GM10248 (cell line): ENCODE measurements at regions of chr3 and their contacts with region 1.

Region 1: GRCh38 chr3:45938864-45939263 is 4.4 kb upstream of the CXCR6 start:
- DNase-seq: peak; percentile 79
- CTCF ChIP-seq: peak; percentile 82

Region 2: DNA sequence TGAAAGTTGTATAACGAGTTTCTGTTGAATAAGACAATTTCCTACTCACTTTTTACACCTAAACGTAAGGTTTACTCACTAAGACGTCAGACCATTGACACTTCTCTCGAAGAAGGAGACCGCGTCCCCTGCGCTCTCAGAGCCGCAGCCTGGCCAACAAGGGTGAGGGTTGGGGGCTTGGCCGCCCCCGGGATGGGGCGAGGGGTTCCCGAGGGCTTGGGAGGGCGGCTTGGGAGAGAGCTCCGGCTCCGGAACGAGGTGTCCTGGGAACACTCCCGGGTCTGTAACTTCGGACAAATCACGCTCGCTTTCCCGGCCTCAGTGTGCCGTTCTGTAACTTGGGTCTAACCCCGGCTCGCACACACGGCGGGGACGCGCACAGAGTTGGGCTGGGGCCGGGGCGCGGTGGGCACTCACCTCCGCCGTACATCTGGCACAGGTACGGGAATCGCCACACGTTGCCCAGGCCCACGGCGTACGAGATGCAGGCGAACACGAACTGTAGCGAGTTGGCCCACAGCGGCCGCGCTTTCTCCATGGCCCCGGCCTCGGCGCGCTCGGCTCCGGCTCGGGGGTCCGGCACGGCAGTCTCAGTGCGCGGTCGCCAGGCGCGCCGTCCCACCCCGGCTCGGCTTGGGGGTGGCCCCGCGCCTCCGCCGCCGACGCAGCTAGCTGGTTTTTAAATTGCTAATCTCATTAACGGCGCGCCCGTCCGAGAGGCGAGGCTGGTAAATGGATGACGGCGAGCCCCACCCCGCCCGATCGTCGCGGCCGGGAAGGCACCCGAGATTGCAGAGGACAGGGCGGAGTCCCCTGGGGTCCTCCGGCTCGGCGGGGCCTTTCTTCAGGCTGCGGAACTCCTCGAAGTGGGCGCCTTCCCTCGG is 142.7 kb before region 1 on chr3 and contains the start of gene SLC6A20:
- CTCF ChIA-PET with region 1: no interaction called
- POLR2A ChIA-PET with region 1: no interaction called
- DNase-seq: peak; percentile 47
- CTCF ChIP-seq: no peak

Region 3: GRCh38 chr3:45907769-45908705 is 30.8 kb before region 1 on chr3:
- CTCF ChIA-PET with region 1: interaction called, 10 read pairs
- POLR2A ChIA-PET with region 1: no interaction called
- DNase-seq: no peak
- CTCF ChIP-seq: no peak

Region 4: GRCh38 chr3:45923755-45924154 is 15.1 kb before region 1 on chr3:
- CTCF ChIA-PET with region 1: interaction called, 66 read pairs
- POLR2A ChIA-PET with region 1: no interaction called
- DNase-seq: no peak
- CTCF ChIP-seq: no peak

Region 5: DNA sequence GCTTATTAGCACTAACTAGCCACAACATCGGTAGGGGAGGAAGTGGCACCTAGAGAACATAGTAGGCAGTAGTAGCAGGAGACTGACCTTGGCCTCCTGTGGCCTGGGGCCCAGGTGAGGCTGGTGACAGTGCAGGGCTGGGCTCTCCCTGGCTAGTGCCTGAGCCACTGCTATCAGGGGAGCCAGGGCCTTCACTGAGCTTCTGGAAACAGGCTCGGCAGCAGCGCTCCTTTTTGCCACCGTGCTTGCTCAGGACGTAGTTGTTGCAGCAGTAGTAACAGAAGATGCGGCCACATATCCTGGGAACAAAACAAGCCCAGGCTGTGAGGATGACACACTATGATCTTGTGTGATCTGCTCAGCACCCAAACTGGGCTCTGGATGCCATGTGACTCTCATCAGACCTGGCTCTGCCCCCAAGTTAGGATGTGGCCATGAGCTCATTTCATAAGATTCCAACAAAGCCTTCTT is 19.5 kb after region 1 on chr3:
- CTCF ChIA-PET with region 1: interaction called, 71 read pairs
- POLR2A ChIA-PET with region 1: no interaction called
- DNase-seq: no peak
- CTCF ChIP-seq: no peak

Region 6: GRCh38 chr3:45972534-45973402 is 33.9 kb after region 1 on chr3:
- CTCF ChIA-PET with region 1: interaction called, 13 read pairs
- POLR2A ChIA-PET with region 1: no interaction called
- DNase-seq: no peak
- CTCF ChIP-seq: no peak

Region 7: GRCh38 chr3:45986303-45986982 is 47.6 kb after region 1 on chr3:
- CTCF ChIA-PET with region 1: interaction called, 10 read pairs
- POLR2A ChIA-PET with region 1: no interaction called
- DNase-seq: no peak
- CTCF ChIP-seq: no peak

Region 8: DNA sequence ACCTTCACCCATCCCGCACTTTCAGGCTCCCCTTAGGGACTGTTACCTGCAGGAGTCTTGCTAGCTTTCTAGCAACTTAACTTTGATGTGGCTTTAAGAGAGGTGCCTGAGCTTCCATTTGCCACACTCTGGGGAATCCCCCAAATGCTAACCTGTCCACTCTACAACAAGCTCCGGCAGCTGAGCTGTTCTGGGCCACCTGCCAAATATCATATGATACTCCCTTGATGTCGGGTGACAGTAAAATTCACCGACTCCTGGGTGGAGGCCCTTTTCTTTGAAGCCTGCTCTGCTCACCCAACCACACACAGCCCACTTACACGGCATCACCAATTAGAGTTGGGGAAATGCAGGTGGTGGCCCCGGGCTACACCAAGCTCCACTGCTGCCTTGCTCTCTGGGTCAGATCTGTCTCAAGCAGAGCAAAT is 126.4 kb after region 1 on chr3:
- CTCF ChIA-PET with region 1: interaction called, 19 read pairs
- POLR2A ChIA-PET with region 1: no interaction called
- DNase-seq: peak; percentile 57
- CTCF ChIP-seq: no peak